OCI-LY7 (cell line): ENCODE measurements at regions of chr10 and their contacts with region 1.

Region 1: GRCh38 chr10:99395750-99396445 is 34.5 kb downstream of the GOT1 start:
- DNase-seq: no peak
- H3K4me3 ChIP-seq: no peak overlapping the region
- H3K27ac ChIP-seq: no peak overlapping the region
- H3K4me1 ChIP-seq: no peaks in the 10 kb centered on the region
- CTCF ChIP-seq: no peak

Region 2: GRCh38 chr10:99370993-99371392 is 24.9 kb before region 1 on chr10:
- CTCF ChIA-PET with region 1: no interaction called
- POLR2A ChIA-PET with region 1: no interaction called
- intact Hi-C with region 1: no loop called
- DNase-seq: peak; percentile 7
- H3K4me3 ChIP-seq: no peak overlapping the region
- H3K27ac ChIP-seq: no peak overlapping the region
- H3K4me1 ChIP-seq: no peaks in the 10 kb centered on the region
- CTCF ChIP-seq: peak; percentile 57

Region 3: GRCh38 chr10:99430451-99431189 is 34.7 kb after region 1 on chr10 and contains the start of gene GOT1:
- CTCF ChIA-PET with region 1: interaction called, 4 read pairs
- POLR2A ChIA-PET with region 1: no interaction called
- intact Hi-C with region 1: loop called (anchors 2 kb)
- DNase-seq: peak; percentile 98
- H3K4me3 ChIP-seq: peak within 1 kb of the TSS; percentile 96
- H3K27ac ChIP-seq: peak within 1 kb of the TSS; percentile 61
- H3K4me1 ChIP-seq: peaks cover 14% of the 10 kb centered on the region
- CTCF ChIP-seq: no peak
- total RNA-seq, gene GOT1: 24.5 and 26.4 TPM in 2 replicates

Region 4: DNA sequence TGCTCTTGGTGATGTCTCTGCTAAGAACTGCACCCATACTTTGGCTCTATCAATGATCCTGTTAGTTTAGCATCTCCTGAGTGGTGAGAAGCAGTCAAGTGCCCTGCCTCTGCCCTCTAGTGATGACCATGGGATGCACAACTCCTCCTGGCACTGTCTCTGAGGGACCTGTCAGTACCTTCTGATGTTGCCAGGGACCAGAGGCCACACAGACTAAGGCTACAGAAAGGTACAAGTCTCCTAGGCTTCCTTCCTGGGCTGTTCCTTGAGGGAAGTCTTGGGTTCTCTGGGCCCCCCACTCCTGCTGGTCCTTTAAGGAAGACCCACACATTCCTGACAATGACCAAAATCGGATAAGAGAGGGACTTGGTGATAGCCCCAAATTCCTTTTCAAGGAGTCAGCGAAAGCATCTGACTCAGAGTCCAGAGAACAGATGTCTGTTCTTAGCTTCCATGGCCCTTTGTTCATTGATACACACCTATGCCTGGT is 152.2 kb after region 1 on chr10:
- CTCF ChIA-PET with region 1: no interaction called
- POLR2A ChIA-PET with region 1: no interaction called
- intact Hi-C with region 1: loop called (anchors 5 kb)
- DNase-seq: peak; percentile 25
- H3K4me3 ChIP-seq: no peak overlapping the region
- H3K27ac ChIP-seq: no peak overlapping the region
- H3K4me1 ChIP-seq: no peaks in the 10 kb centered on the region
- CTCF ChIP-seq: peak; percentile 60

Region 5: GRCh38 chr10:99612167-99612831 is 216.4 kb after region 1 on chr10:
- CTCF ChIA-PET with region 1: no interaction called
- POLR2A ChIA-PET with region 1: no interaction called
- intact Hi-C with region 1: loop called (anchors 1 kb)
- DNase-seq: peak; percentile 66
- H3K4me3 ChIP-seq: no peak overlapping the region
- H3K27ac ChIP-seq: no peak overlapping the region
- H3K4me1 ChIP-seq: no peaks in the 10 kb centered on the region
- CTCF ChIP-seq: peak; percentile 95

Region 6: GRCh38 chr10:99711129-99711719 is 315.3 kb after region 1 on chr10:
- CTCF ChIA-PET with region 1: no interaction called
- POLR2A ChIA-PET with region 1: no interaction called
- intact Hi-C with region 1: loop called (anchors 10 kb)
- DNase-seq: peak; percentile 62
- H3K4me3 ChIP-seq: no peak overlapping the region
- H3K27ac ChIP-seq: no peak overlapping the region
- H3K4me1 ChIP-seq: no peaks in the 10 kb centered on the region
- CTCF ChIP-seq: peak; percentile 86